GM13977 (cell line): ENCODE measurements at regions of chr20 and their contacts with region 1.

Region 1: DNA sequence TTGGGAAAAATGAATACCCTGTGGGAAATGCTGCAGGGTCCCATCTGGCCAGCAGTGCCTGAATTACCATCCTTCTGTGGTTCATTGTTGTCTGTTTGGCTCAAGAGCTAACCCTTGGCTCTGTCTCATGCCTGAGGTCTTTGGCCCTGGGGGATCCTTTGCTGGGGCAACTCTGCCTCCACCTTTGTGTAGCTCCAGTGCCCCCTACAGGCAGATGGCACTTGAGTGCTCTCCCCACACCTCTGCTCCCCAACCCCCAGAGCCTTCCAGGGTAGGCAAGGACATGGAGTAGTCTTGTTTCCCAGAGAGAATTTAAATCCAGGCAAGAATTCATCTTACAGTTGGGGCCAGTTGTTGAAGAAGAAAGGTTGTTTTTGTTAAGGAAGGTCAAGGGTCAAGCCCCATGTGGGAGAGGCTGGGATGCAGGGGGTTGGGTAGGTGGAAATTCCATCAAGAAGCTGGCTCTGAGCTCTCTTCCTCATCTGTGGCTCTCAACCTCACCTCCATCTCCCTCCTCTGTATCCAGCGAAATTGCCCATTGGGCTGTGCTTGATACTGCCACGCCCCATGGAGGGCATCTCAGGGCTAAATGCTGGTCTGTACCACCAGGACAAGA is 44.2 kb downstream of the ZNF831 start:
- DNase-seq: peak; percentile 86
- CTCF ChIP-seq: peak; percentile 80

Region 2: DNA sequence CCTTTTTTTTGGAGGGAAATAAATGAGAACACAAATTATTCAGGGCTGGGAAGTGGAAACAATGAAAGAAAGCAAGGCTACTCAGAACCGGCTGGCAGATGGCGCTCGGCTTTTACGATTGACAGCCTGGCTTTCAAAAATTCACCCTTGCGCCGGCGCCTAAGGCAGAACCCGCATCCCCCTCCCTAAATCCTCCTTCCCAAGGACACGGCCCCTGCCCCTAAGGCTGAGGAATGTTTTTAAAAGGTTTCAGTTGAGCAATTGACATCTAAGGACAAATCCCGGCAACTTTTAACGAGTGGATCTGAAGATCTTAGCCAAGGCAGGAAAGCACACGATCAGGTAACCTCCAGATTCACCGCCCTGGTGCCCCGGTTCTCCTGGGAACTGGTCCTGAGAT is 339.1 kb before region 1 on chr20:
- in situ Hi-C with region 1: loop called (anchors 5 kb)
- DNase-seq: no peak
- CTCF ChIP-seq: peak; percentile 61

Region 3: DNA sequence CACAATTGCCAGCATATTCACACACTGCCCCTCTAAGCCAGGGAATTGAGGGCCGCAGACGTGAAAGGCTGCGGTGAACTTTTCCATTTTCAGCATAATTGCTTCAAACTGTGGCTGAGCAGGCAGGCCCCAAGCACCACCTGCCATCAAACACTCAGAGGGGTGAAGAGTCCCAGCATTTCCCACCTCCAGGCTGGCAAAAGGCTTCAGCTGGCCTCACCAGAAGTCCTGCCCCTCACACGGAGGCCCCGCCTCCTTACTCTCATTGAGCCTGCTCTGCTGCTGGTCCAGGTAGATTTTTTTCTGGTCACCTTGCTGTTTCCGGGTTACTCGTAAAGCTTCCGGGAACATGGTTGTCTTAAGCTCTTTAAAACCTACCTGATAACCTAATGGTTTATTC is 113.3 kb before region 1 on chr20:
- in situ Hi-C with region 1: loop called (anchors 10 kb)
- DNase-seq: no peak
- CTCF ChIP-seq: no peak

Region 4: DNA sequence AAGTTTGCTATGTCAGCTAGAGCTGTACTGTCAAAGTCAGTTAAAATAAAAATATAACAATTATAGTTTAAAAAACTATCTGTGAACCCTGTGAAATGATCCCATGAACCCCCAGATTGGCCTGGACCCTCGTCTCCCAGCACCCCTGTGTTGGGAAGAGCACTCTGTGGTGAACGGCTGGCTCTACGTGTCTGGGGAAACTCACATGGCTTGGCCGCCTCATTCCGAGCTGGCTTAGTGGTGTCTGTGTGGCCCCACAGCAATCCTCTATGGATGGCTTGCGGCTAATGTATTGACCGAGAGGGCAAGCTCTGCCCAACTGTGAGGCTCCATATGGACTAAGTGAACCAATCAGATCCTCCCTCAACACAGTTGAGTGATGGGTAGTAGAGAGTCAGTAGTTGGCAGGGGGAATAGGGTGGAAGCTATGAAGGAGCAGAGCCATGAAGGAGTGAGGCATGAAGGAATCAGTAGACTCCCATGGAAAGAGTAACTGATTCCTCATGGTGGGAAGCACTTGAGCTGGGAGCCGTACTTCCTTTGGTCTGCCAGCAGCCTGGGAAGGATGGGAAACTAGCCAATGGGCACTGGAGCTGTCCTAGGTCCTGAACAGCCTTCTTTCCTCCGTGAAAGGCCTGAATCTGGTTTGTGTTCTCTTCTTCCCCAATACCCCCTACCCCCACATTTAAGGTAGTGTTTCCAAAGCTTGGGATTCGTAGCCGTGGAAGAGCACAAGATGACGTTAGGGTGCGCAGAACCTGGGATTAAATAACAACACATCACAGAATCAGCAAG is 65.9 kb before region 1 on chr20:
- in situ Hi-C with region 1: no loop called
- DNase-seq: no peak
- CTCF ChIP-seq: no peak